ENCODE measurements at regions of chr5 and their contacts with region 1.

Region 1: DNA sequence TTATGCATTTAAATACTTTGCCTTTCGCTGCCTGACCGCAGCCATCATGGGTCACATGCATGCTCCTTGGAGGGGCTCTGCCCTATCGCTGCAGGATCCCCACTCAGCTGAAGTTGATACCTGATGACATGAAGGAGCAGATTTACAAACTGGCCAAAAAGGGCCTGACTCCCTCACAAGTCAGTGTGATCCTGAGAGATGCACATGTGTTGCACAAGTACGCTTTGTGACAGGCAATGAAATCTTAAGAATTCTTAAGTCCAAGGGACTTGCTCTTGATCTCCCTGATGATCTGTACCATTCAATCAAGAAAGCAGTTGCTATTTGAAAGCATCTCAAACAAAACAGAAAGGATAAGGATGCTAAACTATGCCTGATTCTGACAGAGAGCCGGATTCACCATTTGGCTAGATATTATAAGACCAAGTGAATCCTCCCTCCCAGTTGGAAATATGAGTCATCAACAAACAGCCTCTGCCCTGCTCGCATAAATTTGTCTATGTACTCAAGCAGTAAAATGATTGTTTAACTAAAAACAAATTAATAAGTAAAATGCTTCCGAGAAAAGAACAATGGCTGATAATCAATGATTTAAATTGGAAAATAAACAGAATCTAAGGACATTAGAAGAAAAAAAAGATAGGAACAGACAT is 41.6 kb upstream of the PPP2CA start:
- DNase-seq: peak; percentile 60
- ATAC-seq: peak; percentile 77
- H3K4me3 ChIP-seq: no peak overlapping the region
- H3K27ac ChIP-seq: no peak overlapping the region
- H3K4me1 ChIP-seq: no peaks in the 10 kb centered on the region
- H3K27me3 ChIP-seq: no peaks in the 10 kb centered on the region
- CTCF ChIP-seq: no peak
- POLR2A ChIP-seq: no peak
- RAD21 ChIP-seq: no peak

Region 2: DNA sequence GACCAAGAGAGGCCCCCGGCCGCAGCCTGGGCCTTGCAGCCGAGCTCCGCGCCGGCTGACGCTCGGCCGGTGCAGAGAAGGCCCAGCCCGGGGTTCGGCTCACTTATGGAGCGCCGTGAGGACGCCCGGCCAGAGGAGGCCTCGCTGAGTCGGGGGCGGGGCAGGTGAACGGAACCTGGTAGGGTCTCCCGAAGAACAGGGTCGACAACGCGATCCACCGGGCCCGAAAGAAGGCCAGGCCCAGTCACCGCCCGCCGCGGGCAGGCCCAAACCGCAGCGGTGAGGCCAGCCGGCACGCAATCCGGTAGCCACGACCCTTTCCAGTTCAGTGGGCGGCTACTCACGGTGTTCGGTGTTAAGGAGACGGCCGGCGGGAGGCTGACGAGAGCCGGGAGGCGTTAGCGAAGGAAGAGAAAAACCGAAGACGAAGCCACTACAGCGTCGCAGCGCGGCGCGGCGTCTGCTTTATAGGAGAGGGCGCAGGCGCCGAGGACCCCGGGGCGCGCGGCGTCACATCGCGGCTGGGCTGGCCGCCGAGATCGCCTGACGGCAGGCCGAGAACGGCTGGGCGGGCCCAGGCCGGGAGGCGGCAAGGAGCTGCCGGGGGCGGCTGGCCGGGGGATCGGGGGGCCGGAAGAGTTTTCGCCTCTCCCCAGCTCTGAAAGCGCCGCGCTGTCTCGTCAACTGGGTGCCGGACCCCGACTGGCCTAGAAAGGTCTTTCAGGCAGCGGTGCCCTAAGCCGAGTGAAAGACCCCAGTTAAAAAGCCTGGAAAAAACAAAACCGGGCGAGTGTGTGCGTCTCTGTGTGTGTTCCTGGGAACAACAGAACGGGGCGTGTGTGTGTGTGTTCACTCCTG is 90.8 kb before region 1 on chr5 and contains the start of gene SKP1:
- CTCF ChIA-PET with region 1: no interaction called
- POLR2A ChIA-PET with region 1: no interaction called
- dilution Hi-C with region 1: no loop called
- in situ Hi-C with region 1: no loop called
- intact Hi-C with region 1: no loop called
- DNase-seq: peak; percentile 71
- ATAC-seq: peak; percentile 91
- H3K4me3 ChIP-seq: peak within 1 kb of the TSS; percentile 92
- H3K27ac ChIP-seq: peak within 1 kb of the TSS; percentile 94
- H3K4me1 ChIP-seq: no peaks in the 10 kb centered on the region; the same call in 1 of the 2 replicates
- H3K27me3 ChIP-seq: no peaks in the 10 kb centered on the region
- CTCF ChIP-seq: no peak
- POLR2A ChIP-seq: peak; percentile 100
- RAD21 ChIP-seq: no peak
- total RNA-seq, gene SKP1: 206 and 360 TPM in 2 replicates

Region 3: GRCh38 chr5:134209477-134210240 is 57.8 kb before region 1 on chr5:
- CTCF ChIA-PET with region 1: interaction called, 5 read pairs
- POLR2A ChIA-PET with region 1: no interaction called
- dilution Hi-C with region 1: no loop called
- in situ Hi-C with region 1: no loop called
- intact Hi-C with region 1: loop called (anchors 5 kb)
- DNase-seq: no peak
- ATAC-seq: no peak
- H3K4me3 ChIP-seq: no peak overlapping the region
- H3K27ac ChIP-seq: no peak overlapping the region
- H3K4me1 ChIP-seq: peaks cover 6% of the 10 kb centered on the region
- H3K27me3 ChIP-seq: no peaks in the 10 kb centered on the region
- CTCF ChIP-seq: no peak
- POLR2A ChIP-seq: no peak
- RAD21 ChIP-seq: no peak